ENCODE measurements at regions of chr16 and their contacts with region 1.

Region 1: GRCh38 chr16:87174061-87174460 is 143.1 kb downstream of the C16orf95 start:
- DNase-seq: no peak
- H3K4me3 ChIP-seq: no peak overlapping the region
- H3K27ac ChIP-seq: no peak overlapping the region
- H3K4me1 ChIP-seq: no peaks in the 10 kb centered on the region
- H3K27me3 ChIP-seq: peaks cover 9% of the 10 kb centered on the region
- CTCF ChIP-seq: no peak

Region 2: GRCh38 chr16:87145181-87146176 is 28.6 kb before region 1 on chr16:
- CTCF ChIA-PET with region 1: no interaction called
- POLR2A ChIA-PET with region 1: no interaction called
- intact Hi-C with region 1: no loop called
- DNase-seq: peak; percentile 32 to 84
- H3K4me3 ChIP-seq: no peak overlapping the region
- H3K27ac ChIP-seq: peak overlapping the region; percentile 42
- H3K4me1 ChIP-seq: peaks cover 7% of the 10 kb centered on the region; the same call in 1 of the 2 replicates
- H3K27me3 ChIP-seq: no peaks in the 10 kb centered on the region; the same call in 1 of the 2 replicates
- CTCF ChIP-seq: no peak

Region 3: DNA sequence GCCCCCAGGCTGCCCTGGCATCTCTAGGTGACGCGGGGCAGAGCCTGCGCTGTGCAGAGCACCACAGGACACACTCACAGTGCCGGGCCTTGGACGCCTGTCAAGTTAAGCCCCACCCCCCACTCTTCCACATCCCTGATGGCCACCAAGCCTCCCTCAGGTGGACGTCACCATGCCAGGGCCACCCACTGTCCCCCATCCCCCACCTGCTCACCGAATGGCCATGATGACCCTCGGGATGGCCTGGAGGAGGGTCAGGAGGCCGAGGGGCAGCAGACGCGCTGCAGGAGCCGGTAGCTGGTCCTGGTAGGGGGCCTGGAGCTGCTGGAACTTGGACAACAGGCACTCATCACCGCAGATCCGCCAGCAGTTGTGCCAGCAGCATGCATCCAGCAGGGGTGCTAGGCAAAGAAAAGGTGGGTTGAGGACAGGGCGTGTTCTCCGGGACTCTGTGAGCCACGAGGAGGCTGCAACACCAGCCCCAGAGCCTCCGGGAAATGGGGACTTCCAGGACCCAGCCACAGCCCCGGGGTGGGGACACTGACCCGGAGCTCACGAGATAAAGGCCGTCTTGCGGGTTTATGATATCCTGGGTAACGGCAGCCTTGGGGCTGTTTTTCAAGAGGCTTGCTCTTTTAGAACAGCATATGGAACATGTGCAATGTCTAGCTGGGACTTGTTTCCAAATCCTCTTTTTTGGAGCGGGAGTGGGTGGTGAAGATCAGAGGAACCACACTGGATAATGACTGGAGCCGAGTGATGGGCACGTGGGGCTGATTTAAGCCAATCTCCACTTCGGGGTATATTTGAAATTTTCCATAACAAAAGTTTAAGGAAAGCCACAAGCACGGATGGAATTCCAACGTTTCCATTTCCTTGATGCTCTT is 131.7 kb after region 1 on chr16:
- CTCF ChIA-PET with region 1: no interaction called
- POLR2A ChIA-PET with region 1: no interaction called
- intact Hi-C with region 1: no loop called
- DNase-seq: no peak
- H3K4me3 ChIP-seq: no peak overlapping the region
- H3K27ac ChIP-seq: no peak overlapping the region
- H3K4me1 ChIP-seq: no peaks in the 10 kb centered on the region
- H3K27me3 ChIP-seq: no peaks in the 10 kb centered on the region
- CTCF ChIP-seq: no peak

Region 4: GRCh38 chr16:87598431-87598830 is 424.4 kb after region 1 on chr16:
- CTCF ChIA-PET with region 1: no interaction called
- POLR2A ChIA-PET with region 1: interaction called, 16 read pairs
- intact Hi-C with region 1: no loop called
- DNase-seq: no peak
- H3K4me3 ChIP-seq: no peak overlapping the region
- H3K27ac ChIP-seq: no peak overlapping the region
- H3K4me1 ChIP-seq: no peaks in the 10 kb centered on the region
- H3K27me3 ChIP-seq: peaks cover 84% of the 10 kb centered on the region
- CTCF ChIP-seq: no peak